CD4-positive, alpha-beta memory T cell (primary cell): ENCODE measurements at regions of chr15 and their contacts with region 1.

Region 1: DNA sequence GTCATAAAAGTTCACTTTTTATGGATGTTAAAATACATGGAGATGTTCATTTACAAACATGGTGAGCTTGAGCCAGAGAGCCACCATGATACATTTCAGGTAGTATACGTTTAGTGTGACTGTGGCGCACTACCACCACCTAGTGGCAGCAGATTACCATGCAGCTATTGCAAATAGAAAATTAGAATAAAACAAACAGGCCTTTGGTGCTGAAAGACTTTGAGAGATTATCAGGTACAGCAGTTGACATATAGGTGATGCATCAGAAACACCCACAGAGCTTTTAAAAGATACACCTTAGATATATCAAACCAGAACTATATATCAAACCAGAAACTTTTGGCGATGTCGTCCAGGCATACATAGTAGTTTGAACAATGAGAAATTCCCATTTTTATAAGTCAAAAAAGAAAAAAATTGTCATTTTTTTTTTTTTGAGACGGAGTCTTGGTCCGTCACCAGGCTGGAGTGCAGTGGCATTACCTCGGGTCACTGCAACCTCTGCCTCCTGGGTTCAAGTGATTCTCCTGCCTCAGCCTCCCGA is 42.0 kb upstream of the ICE2 start:
- DNase-seq: peak; percentile 71 to 80 (median 73)
- H3K4me3 ChIP-seq: no peak overlapping the region
- H3K4me3 Mint-ChIP-seq: peak overlapping the region in 4 of 8 donors; percentile 33 to 58 (median 43)
- H3K27ac ChIP-seq: no peak overlapping the region
- H3K27ac Mint-ChIP-seq: peak overlapping the region; percentile 84 to 90 (median 87)
- H3K4me1 ChIP-seq: peaks cover 32% of the 10 kb centered on the region
- H3K4me1 Mint-ChIP-seq: peaks cover 46 to 74% (median 59%) of the 10 kb centered on the region in 4 donors
- H3K27me3 ChIP-seq: no peaks in the 10 kb centered on the region
- H3K27me3 Mint-ChIP-seq: no peaks in the 10 kb centered on the region

Region 2: DNA sequence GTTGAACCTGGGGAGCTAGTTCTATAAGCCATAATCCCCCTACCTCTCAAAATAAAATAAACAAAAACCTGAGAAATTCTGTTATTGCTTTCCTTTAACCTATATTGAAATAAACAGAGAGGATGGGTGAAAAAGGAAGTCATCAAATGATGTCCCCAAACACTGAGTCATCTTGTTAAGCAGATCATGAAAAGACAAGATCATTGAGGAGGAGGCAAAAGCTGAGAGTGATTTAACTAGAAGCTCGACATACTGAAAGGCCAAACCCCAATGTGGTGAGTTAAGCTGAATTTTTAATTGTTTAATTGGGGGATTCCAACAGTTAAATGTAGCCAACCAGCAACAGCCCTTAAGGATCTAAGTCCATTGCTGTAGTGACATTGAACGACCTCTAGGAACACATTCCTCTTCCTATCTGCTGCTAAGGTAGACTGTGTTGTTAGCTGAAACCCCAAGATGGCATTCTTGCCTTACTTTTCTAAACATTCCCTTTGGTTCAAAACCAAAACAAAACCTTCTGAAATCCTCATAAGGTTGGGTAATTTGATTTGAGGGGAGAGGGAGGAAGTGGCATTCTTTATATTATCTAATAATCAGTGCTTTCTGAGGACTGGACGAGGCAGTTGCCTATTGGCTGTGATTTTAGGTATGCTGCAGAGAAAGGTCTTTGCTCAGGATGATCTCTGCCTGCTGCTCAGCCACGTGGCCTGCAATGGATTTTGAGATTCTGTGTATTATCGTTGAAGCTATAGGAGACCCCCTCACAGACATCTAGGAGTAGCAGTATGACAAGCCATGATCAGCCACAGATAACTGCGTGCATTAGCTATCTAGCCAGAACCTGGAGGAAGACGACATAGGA is 769.1 kb before region 1 on chr15:
- CTCF ChIA-PET with region 1: no interaction called
- POLR2A ChIA-PET with region 1: no interaction called
- intact Hi-C with region 1: loop called (anchors 2 kb)
- DNase-seq: peak; percentile 44 to 76 (median 70)
- H3K4me3 ChIP-seq: no peak overlapping the region
- H3K4me3 Mint-ChIP-seq: peak overlapping the region in 3 of 8 donors; percentile 3 to 35 (median 13)
- H3K27ac ChIP-seq: no peak overlapping the region
- H3K27ac Mint-ChIP-seq: peak overlapping the region in 5 of 7 donors; percentile 5 to 70 (median 61)
- H3K4me1 ChIP-seq: peaks cover 10% of the 10 kb centered on the region
- H3K4me1 Mint-ChIP-seq: peaks cover 10 to 16% (median 13%) of the 10 kb centered on the region in 4 donors
- H3K27me3 ChIP-seq: no peaks in the 10 kb centered on the region
- H3K27me3 Mint-ChIP-seq: peaks cover 7 to 12% of the 10 kb centered on the region in 2 donors

Region 3: DNA sequence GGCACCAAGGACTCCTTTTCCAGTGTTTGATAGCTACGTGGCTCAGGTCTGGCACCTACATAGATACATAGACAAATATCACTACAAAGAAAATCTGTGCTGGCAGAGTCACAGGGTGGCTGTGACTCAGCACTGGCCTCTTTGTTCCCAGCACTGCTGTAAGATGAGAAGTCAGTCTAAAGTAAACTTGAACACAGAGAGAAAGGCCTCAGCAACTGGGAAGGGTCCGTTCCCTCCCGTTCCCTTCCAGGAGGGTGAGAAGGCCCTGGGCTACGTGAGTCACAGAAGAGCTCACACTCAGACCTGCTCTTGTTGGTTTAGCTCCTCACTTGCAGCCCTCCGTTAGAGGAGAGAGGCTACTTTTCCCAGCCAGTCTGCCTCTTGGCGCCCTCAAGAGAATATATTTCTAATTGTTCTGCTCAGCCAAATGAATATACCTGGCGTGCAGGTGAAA is 146.2 kb before region 1 on chr15:
- CTCF ChIA-PET with region 1: no interaction called
- POLR2A ChIA-PET with region 1: no interaction called
- intact Hi-C with region 1: no loop called
- DNase-seq: no peak
- H3K4me3 ChIP-seq: no peak overlapping the region
- H3K4me3 Mint-ChIP-seq: no peak overlapping the region
- H3K27ac ChIP-seq: no peak overlapping the region
- H3K27ac Mint-ChIP-seq: no peak overlapping the region
- H3K4me1 ChIP-seq: peaks cover 5% of the 10 kb centered on the region
- H3K4me1 Mint-ChIP-seq: peaks cover 14 to 21% (median 19%) of the 10 kb centered on the region in 4 donors
- H3K27me3 ChIP-seq: no peaks in the 10 kb centered on the region
- H3K27me3 Mint-ChIP-seq: no peaks in the 10 kb centered on the region

Region 4: GRCh38 chr15:60454824-60455223 is 66.1 kb before region 1 on chr15:
- CTCF ChIA-PET with region 1: no interaction called
- POLR2A ChIA-PET with region 1: no interaction called
- intact Hi-C with region 1: no loop called
- DNase-seq: no peak
- H3K4me3 ChIP-seq: no peak overlapping the region
- H3K4me3 Mint-ChIP-seq: no peak overlapping the region
- H3K27ac ChIP-seq: no peak overlapping the region
- H3K27ac Mint-ChIP-seq: peak overlapping the region in 1 of 7 donors; percentile 42
- H3K4me1 ChIP-seq: no peaks in the 10 kb centered on the region
- H3K4me1 Mint-ChIP-seq: no peaks in the 10 kb centered on the region
- H3K27me3 ChIP-seq: no peaks in the 10 kb centered on the region
- H3K27me3 Mint-ChIP-seq: no peaks in the 10 kb centered on the region

Region 5: GRCh38 chr15:60464836-60465630 is 55.9 kb before region 1 on chr15:
- CTCF ChIA-PET with region 1: no interaction called
- POLR2A ChIA-PET with region 1: no interaction called
- intact Hi-C with region 1: no loop called
- DNase-seq: no peak
- H3K4me3 ChIP-seq: no peak overlapping the region
- H3K4me3 Mint-ChIP-seq: no peak overlapping the region
- H3K27ac ChIP-seq: no peak overlapping the region
- H3K27ac Mint-ChIP-seq: peak overlapping the region in 2 of 7 donors; percentile 36 to 50
- H3K4me1 ChIP-seq: no peaks in the 10 kb centered on the region
- H3K4me1 Mint-ChIP-seq: peaks cover 3 to 11% (median 4%) of the 10 kb centered on the region in 4 donors
- H3K27me3 ChIP-seq: no peaks in the 10 kb centered on the region
- H3K27me3 Mint-ChIP-seq: no peaks in the 10 kb centered on the region

Region 6: DNA sequence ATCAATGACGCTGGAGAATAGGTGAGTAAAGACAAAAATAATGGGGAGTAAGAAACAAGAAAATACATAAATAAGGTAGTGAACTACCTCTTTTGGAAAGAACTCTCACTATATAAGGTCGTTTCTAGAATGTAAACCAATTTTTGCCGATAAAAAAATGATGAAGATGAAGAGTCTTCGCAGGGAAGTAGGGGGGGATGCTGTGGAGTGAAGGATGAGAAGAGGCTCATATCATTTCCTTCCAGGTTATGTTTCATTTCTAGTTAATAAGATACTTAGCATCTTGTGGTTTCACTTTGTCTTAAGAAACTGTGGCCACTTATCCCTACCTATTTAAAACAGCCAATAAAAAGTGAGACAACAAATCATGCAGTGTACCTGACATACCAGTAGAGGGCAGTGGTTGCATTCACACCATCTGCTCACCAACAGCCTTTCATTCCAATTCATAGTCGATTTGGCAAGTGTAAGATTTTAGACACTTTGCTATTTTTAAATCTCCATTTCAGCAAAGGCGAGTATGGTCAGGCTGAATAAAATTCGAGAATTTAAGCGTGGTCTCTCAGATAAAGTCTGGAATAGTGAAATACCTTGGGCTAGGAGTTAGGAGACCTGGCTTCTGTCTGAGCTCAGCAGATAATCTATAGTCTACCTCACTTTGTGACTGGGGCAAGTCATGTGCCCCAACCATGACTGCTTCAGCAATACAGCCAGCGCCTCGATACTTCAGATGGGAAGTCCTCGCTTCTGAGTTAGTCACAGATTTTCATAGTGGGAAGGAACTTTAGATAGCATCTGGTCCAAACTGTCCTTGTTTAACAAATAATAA is 13.1 kb before region 1 on chr15:
- CTCF ChIA-PET with region 1: interaction called, 75 read pairs
- POLR2A ChIA-PET with region 1: interaction called, 11 read pairs
- intact Hi-C with region 1: loop called (anchors 1 kb)
- DNase-seq: peak; percentile 66 to 79 (median 78)
- H3K4me3 ChIP-seq: no peak overlapping the region
- H3K4me3 Mint-ChIP-seq: peak overlapping the region in 6 of 8 donors; percentile 0 to 67 (median 28)
- H3K27ac ChIP-seq: peak overlapping the region; percentile 21
- H3K27ac Mint-ChIP-seq: peak overlapping the region; percentile 83 to 94 (median 91)
- H3K4me1 ChIP-seq: peaks cover 43% of the 10 kb centered on the region
- H3K4me1 Mint-ChIP-seq: peaks cover 29 to 55% (median 41%) of the 10 kb centered on the region in 4 donors
- H3K27me3 ChIP-seq: no peaks in the 10 kb centered on the region
- H3K27me3 Mint-ChIP-seq: no peaks in the 10 kb centered on the region

Region 7: DNA sequence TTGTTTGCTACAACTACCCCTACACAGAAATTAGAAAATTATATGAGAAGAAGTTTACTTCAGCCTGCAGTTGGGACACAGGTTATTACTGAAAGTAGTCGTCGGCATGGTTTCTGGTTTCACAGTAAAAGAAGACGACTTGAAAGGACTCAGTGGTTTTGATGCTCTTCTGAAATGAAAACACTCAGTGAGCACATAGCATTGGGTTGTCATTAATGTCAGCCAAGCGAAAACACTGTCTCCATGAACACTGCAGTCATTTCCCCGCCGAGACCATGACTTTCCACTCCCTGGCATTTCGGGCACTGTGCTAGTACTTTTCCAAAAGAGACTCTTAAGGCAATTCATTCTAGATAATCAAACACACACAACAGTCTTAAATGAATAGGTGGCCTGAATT is 27.2 kb after region 1 on chr15:
- CTCF ChIA-PET with region 1: interaction called, 53 read pairs
- POLR2A ChIA-PET with region 1: interaction called, 16 read pairs
- intact Hi-C with region 1: no loop called
- DNase-seq: peak; percentile 47 to 68 (median 58)
- H3K4me3 ChIP-seq: no peak overlapping the region
- H3K4me3 Mint-ChIP-seq: peak overlapping the region; percentile 68 to 86 (median 77)
- H3K27ac ChIP-seq: peak overlapping the region; percentile 68
- H3K27ac Mint-ChIP-seq: peak overlapping the region; percentile 92 to 99 (median 97)
- H3K4me1 ChIP-seq: peaks cover 100% of the 10 kb centered on the region
- H3K4me1 Mint-ChIP-seq: peaks cover 80 to 100% (median 90%) of the 10 kb centered on the region in 4 donors
- H3K27me3 ChIP-seq: no peaks in the 10 kb centered on the region
- H3K27me3 Mint-ChIP-seq: no peaks in the 10 kb centered on the region

Region 8: GRCh38 chr15:60573936-60574335 is 53.0 kb after region 1 on chr15:
- CTCF ChIA-PET with region 1: interaction called, 20 read pairs
- POLR2A ChIA-PET with region 1: interaction called, 10 read pairs
- intact Hi-C with region 1: no loop called
- DNase-seq: peak; percentile 61 to 90 (median 63)
- H3K4me3 ChIP-seq: peak overlapping the region in 1 of 2 donors; percentile 12
- H3K4me3 Mint-ChIP-seq: peak overlapping the region; percentile 81 to 94 (median 89)
- H3K27ac ChIP-seq: peak overlapping the region; percentile 74
- H3K27ac Mint-ChIP-seq: peak overlapping the region; percentile 92 to 100 (median 99)
- H3K4me1 ChIP-seq: peaks cover 99% of the 10 kb centered on the region
- H3K4me1 Mint-ChIP-seq: peaks cover 76 to 96% (median 86%) of the 10 kb centered on the region in 4 donors
- H3K27me3 ChIP-seq: no peaks in the 10 kb centered on the region
- H3K27me3 Mint-ChIP-seq: no peaks in the 10 kb centered on the region

Region 9: GRCh38 chr15:60592371-60593169 is 71.7 kb after region 1 on chr15:
- CTCF ChIA-PET with region 1: interaction called, 7 read pairs
- POLR2A ChIA-PET with region 1: interaction called, 20 read pairs
- intact Hi-C with region 1: no loop called
- DNase-seq: peak; percentile 88 to 91 (median 90)
- H3K4me3 ChIP-seq: peak overlapping the region; percentile 39 to 75
- H3K4me3 Mint-ChIP-seq: peak overlapping the region; percentile 80 to 90 (median 87)
- H3K27ac ChIP-seq: peak overlapping the region; percentile 92
- H3K27ac Mint-ChIP-seq: peak overlapping the region; percentile 82 to 94 (median 92)
- H3K4me1 ChIP-seq: peaks cover 36% of the 10 kb centered on the region
- H3K4me1 Mint-ChIP-seq: peaks cover 28 to 55% (median 37%) of the 10 kb centered on the region in 4 donors
- H3K27me3 ChIP-seq: no peaks in the 10 kb centered on the region
- H3K27me3 Mint-ChIP-seq: no peaks in the 10 kb centered on the region

Region 10: GRCh38 chr15:60916679-60917460 is 396.0 kb after region 1 on chr15:
- CTCF ChIA-PET with region 1: interaction called, 27 read pairs
- POLR2A ChIA-PET with region 1: interaction called, 6 read pairs
- intact Hi-C with region 1: loop called (anchors 2 kb)
- DNase-seq: peak; percentile 85 to 95 (median 88)
- H3K4me3 ChIP-seq: no peak overlapping the region
- H3K4me3 Mint-ChIP-seq: peak overlapping the region in 5 of 8 donors; percentile 18 to 72 (median 57)
- H3K27ac ChIP-seq: peak overlapping the region; percentile 55
- H3K27ac Mint-ChIP-seq: peak overlapping the region; percentile 82 to 98 (median 94)
- H3K4me1 ChIP-seq: peaks cover 12% of the 10 kb centered on the region
- H3K4me1 Mint-ChIP-seq: peaks cover 7 to 17% (median 10%) of the 10 kb centered on the region in 4 donors
- H3K27me3 ChIP-seq: no peaks in the 10 kb centered on the region
- H3K27me3 Mint-ChIP-seq: no peaks in the 10 kb centered on the region